Naive thymus-derived CD4-positive, alpha-beta T cell (primary cell): ENCODE measurements at regions of chr1 and their contacts with region 1.

Region 1: DNA sequence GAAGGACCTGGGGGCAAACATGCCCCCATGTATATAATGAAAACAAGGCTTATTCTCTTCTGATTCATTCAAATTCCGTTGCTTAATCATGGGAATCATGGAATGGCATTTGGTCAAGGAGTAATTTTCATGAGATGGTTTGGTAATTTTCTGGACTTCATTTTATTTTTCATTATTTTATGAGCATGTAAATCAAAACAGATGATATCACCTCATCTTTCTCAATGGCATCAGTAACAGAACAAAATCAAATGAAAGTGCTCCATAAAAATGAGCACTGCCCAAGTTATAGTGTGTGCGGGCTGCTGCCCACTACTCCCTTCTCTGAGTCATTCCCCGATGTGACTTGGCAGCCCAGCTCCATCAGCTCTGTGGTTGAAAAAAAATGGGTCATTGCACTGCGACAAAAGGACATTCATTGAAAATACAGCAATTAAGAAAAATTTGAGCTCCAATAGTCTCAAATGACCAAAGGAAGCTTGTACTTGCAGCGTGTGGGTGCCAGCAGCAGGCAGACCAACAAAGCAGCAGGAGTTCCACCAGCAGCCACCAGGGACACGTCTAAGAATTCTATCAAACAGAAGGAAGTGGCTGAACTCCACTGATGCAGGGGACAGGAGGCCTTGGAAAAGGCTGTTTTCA is 84.3 kb upstream of the VAV3 start:
- DNase-seq: peak in 2 of 9 donors; percentile 30 to 35
- ATAC-seq: peak; percentile 40
- H3K4me3 ChIP-seq: no peak overlapping the region
- H3K4me3 Mint-ChIP-seq: peak overlapping the region in 5 of 10 donors; percentile 10 to 43 (median 17)
- H3K27ac ChIP-seq: no peak overlapping the region
- H3K27ac Mint-ChIP-seq: peak overlapping the region in 3 of 9 donors; percentile 18 to 68 (median 65)
- H3K4me1 ChIP-seq: peaks cover 0 to 43% of the 10 kb centered on the region in 2 donors
- H3K4me1 Mint-ChIP-seq: peaks cover 0 to 38% (median 30%) of the 10 kb centered on the region in 7 donors
- H3K27me3 ChIP-seq: no peaks in the 10 kb centered on the region
- H3K27me3 Mint-ChIP-seq: peaks cover 0 to 3% (median 0%) of the 10 kb centered on the region in 5 donors

Region 2: GRCh38 chr1:108067884-108068538 is 18.7 kb after region 1 on chr1:
- CTCF ChIA-PET with region 1: interaction called, 3 read pairs
- POLR2A ChIA-PET with region 1: interaction called, 3 read pairs
- intact Hi-C with region 1: loop called in 1 of 2 experiments (anchors 2 kb)
- DNase-seq: peak in 1 of 9 donors; percentile 16
- ATAC-seq: no peak
- H3K4me3 ChIP-seq: no peak overlapping the region
- H3K4me3 Mint-ChIP-seq: peak overlapping the region in 3 of 10 donors; percentile 10 to 55 (median 12)
- H3K27ac ChIP-seq: no peak overlapping the region
- H3K27ac Mint-ChIP-seq: peak overlapping the region in 3 of 9 donors; percentile 18 to 30 (median 24)
- H3K4me1 ChIP-seq: peaks cover 5 to 7% of the 10 kb centered on the region in 2 donors
- H3K4me1 Mint-ChIP-seq: peaks cover 7 to 21% (median 13%) of the 10 kb centered on the region in 7 donors
- H3K27me3 ChIP-seq: no peaks in the 10 kb centered on the region
- H3K27me3 Mint-ChIP-seq: no peaks in the 10 kb centered on the region

Region 3: DNA sequence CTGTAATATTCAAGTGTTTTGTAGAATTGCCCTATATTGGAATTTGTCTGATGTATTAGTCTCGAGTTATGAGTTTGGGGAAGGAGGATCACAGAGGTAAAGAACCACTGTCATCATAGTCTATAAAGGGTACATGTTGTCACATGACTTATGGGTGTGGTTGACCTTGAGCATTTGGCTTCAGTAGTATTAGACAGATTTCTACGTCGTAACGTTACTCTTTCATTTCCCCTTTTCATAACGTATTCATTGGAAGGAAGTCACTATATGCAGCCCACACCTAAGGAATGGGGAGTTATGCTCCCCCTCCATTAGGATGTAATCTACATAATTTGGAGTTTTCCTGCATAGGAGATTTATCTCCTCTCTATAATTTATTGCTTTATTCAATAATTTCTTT is 25.8 kb after region 1 on chr1:
- CTCF ChIA-PET with region 1: interaction called, 3 read pairs
- POLR2A ChIA-PET with region 1: interaction called, 3 read pairs
- intact Hi-C with region 1: loop called in 1 of 2 experiments (anchors 1 kb)
- DNase-seq: no peak
- ATAC-seq: peak; percentile 58
- H3K4me3 ChIP-seq: no peak overlapping the region
- H3K4me3 Mint-ChIP-seq: no peak overlapping the region
- H3K27ac ChIP-seq: no peak overlapping the region
- H3K27ac Mint-ChIP-seq: peak overlapping the region in 2 of 9 donors; percentile 21 to 78
- H3K4me1 ChIP-seq: peaks cover 28 to 37% of the 10 kb centered on the region in 2 donors
- H3K4me1 Mint-ChIP-seq: peaks cover 24 to 60% (median 47%) of the 10 kb centered on the region in 7 donors
- H3K27me3 ChIP-seq: no peaks in the 10 kb centered on the region
- H3K27me3 Mint-ChIP-seq: no peaks in the 10 kb centered on the region

Region 4: DNA sequence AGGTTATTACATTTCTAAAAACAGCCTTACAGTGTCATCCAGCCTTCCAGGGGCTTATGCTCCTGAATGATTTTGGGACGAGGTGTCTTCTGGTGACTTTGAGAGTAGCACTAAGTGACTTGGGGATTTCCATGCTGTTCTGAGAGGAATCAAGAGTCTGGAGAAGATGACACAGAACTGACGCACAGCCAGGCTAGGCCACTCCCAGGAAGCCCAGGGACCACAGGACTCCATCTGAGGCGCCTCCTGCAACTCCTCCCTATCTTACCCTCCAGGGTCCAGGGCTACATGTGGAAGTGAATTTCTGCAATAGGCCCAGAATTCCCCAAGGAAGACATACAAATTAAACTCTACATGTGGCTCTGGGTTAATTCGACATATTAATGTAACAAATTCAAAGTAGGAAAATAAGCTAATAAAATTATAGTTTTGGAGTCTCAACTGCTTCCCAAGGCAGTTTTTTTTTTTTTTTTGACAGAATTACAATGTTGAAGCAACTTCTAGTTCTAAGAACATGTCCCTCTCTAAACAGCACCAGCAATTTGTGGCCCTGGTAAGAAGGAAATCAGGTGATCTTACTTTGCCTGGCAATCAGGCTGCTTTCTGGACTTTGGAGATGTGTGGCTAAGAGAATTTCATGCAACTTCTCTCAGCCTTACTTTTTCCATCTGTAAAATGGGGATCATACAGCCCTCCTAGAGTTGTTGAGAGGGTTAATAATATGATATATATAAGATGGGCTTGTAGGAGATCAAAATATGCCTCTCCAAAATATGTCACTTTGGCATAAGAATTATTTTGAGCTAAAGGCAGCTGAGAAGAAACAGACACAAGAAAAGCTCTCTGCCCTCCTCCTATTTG is 58.6 kb after region 1 on chr1:
- CTCF ChIA-PET with region 1: no interaction called
- POLR2A ChIA-PET with region 1: no interaction called
- intact Hi-C with region 1: no loop called
- DNase-seq: peak in 4 of 9 donors; percentile 3 to 37 (median 17)
- ATAC-seq: peak; percentile 98
- H3K4me3 ChIP-seq: no peak overlapping the region
- H3K4me3 Mint-ChIP-seq: no peak overlapping the region
- H3K27ac ChIP-seq: no peak overlapping the region
- H3K27ac Mint-ChIP-seq: peak overlapping the region in 4 of 9 donors; percentile 6 to 38 (median 26)
- H3K4me1 ChIP-seq: no peaks in the 10 kb centered on the region
- H3K4me1 Mint-ChIP-seq: peaks cover 0 to 12% (median 8%) of the 10 kb centered on the region in 7 donors
- H3K27me3 ChIP-seq: no peaks in the 10 kb centered on the region
- H3K27me3 Mint-ChIP-seq: no peaks in the 10 kb centered on the region